ENCODE measurements at regions of chr7 and their contacts with region 1.

Region 1: DNA sequence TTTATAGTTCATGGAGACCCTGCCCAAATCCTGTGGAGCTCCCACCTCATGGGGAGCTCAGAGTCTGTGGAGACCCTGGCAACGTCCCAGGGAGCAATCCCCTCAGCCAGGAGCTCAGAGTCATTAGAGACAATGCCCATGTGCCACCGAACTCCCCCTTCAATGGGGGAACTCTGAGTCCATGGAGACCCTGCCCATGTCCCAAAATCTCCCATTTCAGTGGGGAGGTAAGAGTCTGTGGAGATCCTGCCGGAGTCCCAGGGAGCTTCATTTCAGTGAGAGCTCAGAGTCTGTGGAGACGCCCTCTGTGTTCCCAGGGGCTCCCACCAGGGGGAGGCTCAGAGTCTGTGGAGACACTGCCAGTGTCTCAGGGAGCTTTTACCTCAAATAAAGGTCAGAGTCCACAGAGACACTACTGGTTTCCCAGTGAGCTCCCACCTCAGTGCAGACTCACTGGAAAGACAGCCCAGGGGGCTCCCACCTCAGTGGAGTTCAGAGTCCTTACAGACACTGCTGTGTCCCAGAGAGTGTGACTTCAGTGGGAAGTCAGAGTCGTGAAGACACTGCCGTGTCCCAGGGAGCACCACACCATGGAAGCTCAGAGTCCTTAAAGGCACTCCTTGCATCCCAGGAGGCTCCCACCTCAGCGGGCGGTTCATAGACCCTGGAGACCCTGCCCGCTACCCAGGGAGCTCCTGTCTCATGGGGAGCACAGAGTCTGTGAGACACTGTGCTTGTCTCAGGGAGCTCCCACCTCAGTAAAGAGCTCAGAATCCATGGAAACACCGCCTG is 5.0 kb downstream of the MYO1G start:
- DNase-seq: no peak
- H3K4me3 ChIP-seq: no peak overlapping the region
- H3K27ac ChIP-seq: no peak overlapping the region
- H3K4me1 ChIP-seq: no peaks in the 10 kb centered on the region; a peak in 1 of 7 replicates
- H3K27me3 ChIP-seq: no peaks in the 10 kb centered on the region
- CTCF ChIP-seq: peak in 2 of 3 experiments; percentile 41 to 42; a peak in 3 of 4 replicates
- EP300 ChIP-seq: no peak
- POLR2A ChIP-seq: no peak
- RAD21 ChIP-seq: peak; percentile 37 to 47

Region 2: DNA sequence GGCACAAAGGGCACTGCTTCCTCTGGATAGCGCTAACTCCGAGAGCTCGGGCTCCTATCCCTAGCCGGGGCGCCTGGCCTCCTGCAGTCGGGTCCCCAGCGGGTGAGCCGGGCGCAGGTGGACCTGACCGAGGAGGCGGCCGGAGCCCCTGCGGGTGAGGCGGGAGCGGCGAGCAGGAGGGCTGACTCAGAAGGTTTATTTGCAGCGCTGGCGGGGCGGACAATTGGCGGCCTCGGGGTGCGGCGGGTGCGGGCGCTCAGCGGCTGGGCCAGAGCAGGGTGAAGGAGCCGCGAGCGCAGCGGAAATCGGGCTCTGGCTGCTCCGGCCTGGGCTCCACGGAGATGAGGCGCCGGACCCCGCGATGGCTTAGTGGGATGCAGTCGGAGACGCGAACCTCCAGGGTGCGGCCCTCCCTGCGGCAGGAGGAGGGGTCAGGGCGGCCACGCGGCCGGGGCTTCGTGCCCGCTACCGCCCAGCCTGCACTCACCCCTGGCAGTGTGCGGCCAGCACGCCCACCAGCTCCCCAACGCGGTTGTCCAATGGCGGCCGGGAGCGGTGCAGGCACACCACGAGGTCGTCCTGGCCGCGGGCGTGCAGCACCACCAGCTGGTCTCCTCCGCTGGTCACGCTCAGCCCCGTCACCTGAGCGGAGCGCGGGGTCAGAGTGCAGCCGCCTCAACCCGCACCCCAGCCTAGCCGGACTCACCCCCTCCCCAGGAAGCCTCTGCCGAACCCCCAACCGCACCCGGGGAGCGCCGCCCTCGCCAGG is 11.1 kb before region 1 on chr7:
- CTCF ChIA-PET with region 1: interaction called, 33 read pairs
- POLR2A ChIA-PET with region 1: interaction called, 327 read pairs
- DNase-seq: peak in 1 of 2 experiments; percentile 67
- H3K4me3 ChIP-seq: peak overlapping the region; percentile 20 to 58 (median 38)
- H3K27ac ChIP-seq: no peak overlapping the region
- H3K4me1 ChIP-seq: peaks cover 0 to 11% (median 4%) of the 10 kb centered on the region in 4 experiments; a peak in 4 of 7 replicates
- H3K27me3 ChIP-seq: peaks cover 10 to 40% (median 23%) of the 10 kb centered on the region in 4 experiments; a peak in 6 of 7 replicates
- CTCF ChIP-seq: peak in 1 of 3 experiments; percentile 12; a peak in 1 of 4 replicates
- EP300 ChIP-seq: no peak
- POLR2A ChIP-seq: 0 out of 3 replicates have a peak, but pooled peaks of 1 of the 2 experiments have one; percentile 36
- RAD21 ChIP-seq: peak; percentile 22 to 31; a peak in 2 of 4 replicates

Region 3: GRCh38 chr7:44986218-44987053 is 12.6 kb after region 1 on chr7:
- CTCF ChIA-PET with region 1: interaction called, 43 read pairs
- POLR2A ChIA-PET with region 1: interaction called, 327 read pairs
- DNase-seq: peak; percentile 83 to 94
- H3K4me3 ChIP-seq: peak overlapping the region; percentile 89 to 97 (median 94)
- H3K27ac ChIP-seq: peak overlapping the region; percentile 94
- H3K4me1 ChIP-seq: peaks cover 0 to 7% (median 5%) of the 10 kb centered on the region in 4 experiments; a peak in 3 of 7 replicates
- H3K27me3 ChIP-seq: no peaks in the 10 kb centered on the region
- CTCF ChIP-seq: no peak
- EP300 ChIP-seq: peak in 1 of 2 experiments; percentile 40; a peak in 1 of 3 replicates
- POLR2A ChIP-seq: peak; percentile 98 to 99
- RAD21 ChIP-seq: no peak

Region 4: GRCh38 chr7:44999245-45000095 is 25.7 kb after region 1 on chr7:
- CTCF ChIA-PET with region 1: interaction called, 12 read pairs
- POLR2A ChIA-PET with region 1: interaction called, 193 read pairs
- DNase-seq: peak; percentile 96 to 97
- H3K4me3 ChIP-seq: peak overlapping the region; percentile 66 to 98 (median 73)
- H3K27ac ChIP-seq: peak overlapping the region; percentile 97
- H3K4me1 ChIP-seq: peaks cover 0 to 6% (median 3%) of the 10 kb centered on the region in 4 experiments; a peak in 3 of 7 replicates
- H3K27me3 ChIP-seq: no peaks in the 10 kb centered on the region
- CTCF ChIP-seq: no peak
- EP300 ChIP-seq: no peak
- POLR2A ChIP-seq: peak; percentile 56 to 85
- RAD21 ChIP-seq: no peak

Region 5: GRCh38 chr7:45073786-45074527 is 100.2 kb after region 1 on chr7:
- CTCF ChIA-PET with region 1: interaction called, 40 read pairs
- POLR2A ChIA-PET with region 1: no interaction called
- DNase-seq: no peak
- H3K4me3 ChIP-seq: no peak overlapping the region
- H3K27ac ChIP-seq: no peak overlapping the region
- H3K4me1 ChIP-seq: no peaks in the 10 kb centered on the region; a peak in 1 of 7 replicates
- H3K27me3 ChIP-seq: no peaks in the 10 kb centered on the region
- CTCF ChIP-seq: no peak
- EP300 ChIP-seq: no peak
- POLR2A ChIP-seq: no peak
- RAD21 ChIP-seq: no peak

Region 6: DNA sequence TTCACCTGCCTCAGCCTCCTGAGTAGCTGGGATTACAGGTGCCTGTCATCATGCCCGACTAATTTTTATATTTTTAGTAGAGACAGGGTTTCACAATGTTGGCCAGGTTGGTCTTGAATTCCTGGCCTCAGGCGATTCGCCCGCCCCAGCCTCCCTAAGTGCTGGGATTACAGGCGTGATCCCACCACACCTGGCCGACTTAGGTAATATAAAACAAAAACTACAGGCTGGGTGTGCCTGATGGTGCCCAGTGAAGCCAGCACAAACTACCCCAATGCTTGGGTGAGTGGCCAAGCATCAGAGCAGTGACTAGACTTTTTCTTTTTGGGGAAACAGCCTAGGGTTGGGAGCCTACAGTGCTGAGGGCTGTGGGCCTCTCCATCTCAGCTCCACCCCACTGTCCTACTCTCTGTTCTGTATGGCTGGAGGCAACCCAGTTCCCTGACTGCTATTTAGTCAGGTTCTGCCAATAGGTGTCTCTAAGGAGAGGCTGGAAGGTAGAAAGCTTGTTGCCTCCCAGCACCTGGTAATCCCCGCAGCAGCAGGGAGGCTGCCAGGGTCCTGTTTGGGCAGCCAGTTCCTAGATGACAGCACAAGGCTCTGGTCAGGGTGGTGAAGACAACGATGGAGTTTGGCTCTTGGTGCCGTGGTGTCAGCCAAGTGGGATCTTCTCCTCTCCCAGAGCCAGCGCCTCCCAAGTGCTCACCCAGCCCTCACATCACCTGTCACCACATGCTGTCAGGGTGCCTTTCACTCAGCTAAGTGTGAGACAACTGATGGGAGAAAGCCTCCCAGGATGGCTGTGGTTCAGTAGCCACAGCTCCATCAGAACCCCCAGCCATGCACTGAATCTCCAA is 125.4 kb after region 1 on chr7:
- CTCF ChIA-PET with region 1: interaction called, 13 read pairs
- POLR2A ChIA-PET with region 1: interaction called, 4 read pairs
- DNase-seq: no peak
- H3K4me3 ChIP-seq: no peak overlapping the region
- H3K27ac ChIP-seq: no peak overlapping the region
- H3K4me1 ChIP-seq: no peaks in the 10 kb centered on the region
- H3K27me3 ChIP-seq: no peaks in the 10 kb centered on the region
- CTCF ChIP-seq: no peak
- EP300 ChIP-seq: no peak
- POLR2A ChIP-seq: peak in 1 of 2 experiments; percentile 42; a peak in 1 of 3 replicates
- RAD21 ChIP-seq: peak in 1 of 2 experiments; percentile 8; a peak in 1 of 4 replicates